ENCODE measurements at regions of chr9 and their contacts with region 1.

Region 1: GRCh38 chr9:27529316-27530278 is at the start of gene MOB3B:
- DNase-seq: peak; percentile 85 to 93 (median 91)
- H3K4me3 ChIP-seq: peak within 1 kb of the TSS; percentile 68
- H3K27ac ChIP-seq: peak within 1 kb of the TSS; percentile 91 to 92
- H3K4me1 ChIP-seq: peaks cover 13% of the 10 kb centered on the region
- H3K27me3 ChIP-seq: no peaks in the 10 kb centered on the region
- CTCF ChIP-seq: peak; percentile 95 to 99 (median 98)
- EP300 ChIP-seq: no peak
- POLR2A ChIP-seq: peak; percentile 59
- total RNA-seq, gene MOB3B: 19.3 to 68.2 (median 28.1) TPM

Region 2: GRCh38 chr9:27353474-27354229 is 175.9 kb before region 1 on chr9:
- intact Hi-C with region 1: loop called in 1 of 4 experiments (anchors 5 kb)
- DNase-seq: no peak
- H3K4me3 ChIP-seq: no peak overlapping the region
- H3K27ac ChIP-seq: no peak overlapping the region
- H3K4me1 ChIP-seq: peaks cover 20% of the 10 kb centered on the region
- H3K27me3 ChIP-seq: no peaks in the 10 kb centered on the region
- CTCF ChIP-seq: no peak
- EP300 ChIP-seq: no peak
- POLR2A ChIP-seq: no peak

Region 3: DNA sequence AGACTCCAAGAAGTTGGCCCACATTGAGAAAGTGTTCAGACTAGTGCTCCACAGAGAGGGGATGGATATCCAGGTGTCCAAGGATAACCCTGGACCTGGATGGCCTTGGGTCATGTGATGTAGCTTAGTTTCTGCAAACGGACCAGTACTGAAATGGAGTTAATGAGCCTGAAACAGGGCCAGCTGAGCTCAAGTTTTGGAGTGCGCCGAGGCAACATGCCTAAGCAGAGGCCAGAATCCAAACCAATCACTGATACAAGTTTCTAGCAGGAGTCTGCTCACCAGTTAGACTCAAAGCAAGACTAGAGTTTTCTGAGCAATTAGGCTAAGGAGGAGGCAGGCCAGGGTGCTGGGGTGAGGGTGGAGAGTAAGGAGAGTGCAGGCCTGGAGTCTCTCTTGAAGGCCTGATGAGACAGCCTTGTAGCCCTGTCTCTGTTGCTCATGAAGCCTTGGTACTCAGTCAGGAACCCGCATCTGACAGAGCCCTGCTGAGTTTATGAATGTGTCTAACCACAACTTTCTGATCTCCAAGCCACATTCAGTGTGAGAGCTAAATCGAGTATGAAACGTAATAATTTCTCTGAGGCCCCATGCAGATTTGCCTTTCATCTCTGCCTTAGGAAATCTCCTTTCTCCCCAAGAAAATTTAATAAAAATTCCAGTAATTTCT is 163.8 kb before region 1 on chr9:
- intact Hi-C with region 1: loop called in 2 of 4 experiments (anchors 10 kb)
- DNase-seq: peak in 1 of 5 donors; percentile 34
- H3K4me3 ChIP-seq: no peak overlapping the region
- H3K27ac ChIP-seq: peak overlapping the region; percentile 71 to 84
- H3K4me1 ChIP-seq: peaks cover 38% of the 10 kb centered on the region
- H3K27me3 ChIP-seq: no peaks in the 10 kb centered on the region
- CTCF ChIP-seq: no peak
- EP300 ChIP-seq: no peak
- POLR2A ChIP-seq: no peak

Region 4: GRCh38 chr9:27473111-27473529 is 56.5 kb before region 1 on chr9:
- intact Hi-C with region 1: loop called in 2 of 4 experiments (anchors 10 kb)
- DNase-seq: peak in 3 of 5 donors; percentile 37 to 67 (median 42)
- H3K4me3 ChIP-seq: no peak overlapping the region
- H3K27ac ChIP-seq: peak overlapping the region; percentile 67 to 68
- H3K4me1 ChIP-seq: peaks cover 55% of the 10 kb centered on the region
- H3K27me3 ChIP-seq: no peaks in the 10 kb centered on the region
- CTCF ChIP-seq: no peak
- EP300 ChIP-seq: no peak
- POLR2A ChIP-seq: no peak